Mammary epithelial cell (primary cell): ENCODE measurements at regions of chr2 and their contacts with region 1.

Region 1: GRCh38 chr2:110919738-110920137 is 187.4 kb downstream of the ACOXL start:
- DNase-seq: no peak
- H3K4me3 ChIP-seq: no peak overlapping the region
- H3K27ac ChIP-seq: no peak overlapping the region
- H3K4me1 ChIP-seq: no peaks in the 10 kb centered on the region
- H3K27me3 ChIP-seq: no peaks in the 10 kb centered on the region
- CTCF ChIP-seq: no peak

Region 2: DNA sequence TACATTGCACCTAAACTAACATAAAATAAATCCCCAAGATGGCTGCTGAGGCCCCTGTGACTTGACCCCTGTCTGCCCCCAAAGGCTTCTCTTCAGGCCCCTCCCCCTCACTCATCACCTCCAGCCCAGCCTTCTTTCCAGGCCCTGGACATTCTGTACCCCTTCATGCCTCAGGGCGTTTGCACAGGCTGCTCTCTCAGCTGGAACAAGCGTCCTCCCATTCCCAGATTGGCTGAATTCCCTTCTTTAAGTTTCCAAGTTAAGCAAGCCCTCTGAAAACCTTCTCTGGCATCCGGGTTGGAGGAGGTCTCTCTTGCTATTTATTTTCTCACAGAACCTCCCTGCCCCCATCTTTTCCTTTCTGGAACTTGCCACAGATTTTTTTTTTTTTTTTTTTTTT is 35.8 kb after region 1 on chr2:
- CTCF ChIA-PET with region 1: no interaction called
- dilution Hi-C with region 1: loop called (anchors 5 kb)
- in situ Hi-C with region 1: no loop called
- intact Hi-C with region 1: no loop called
- DNase-seq: no peak
- H3K4me3 ChIP-seq: no peak overlapping the region
- H3K27ac ChIP-seq: no peak overlapping the region
- H3K4me1 ChIP-seq: no peaks in the 10 kb centered on the region
- H3K27me3 ChIP-seq: peaks cover 3% of the 10 kb centered on the region
- CTCF ChIP-seq: no peak

Region 3: GRCh38 chr2:111030260-111030891 is 110.6 kb after region 1 on chr2:
- CTCF ChIA-PET with region 1: no interaction called
- dilution Hi-C with region 1: no loop called
- in situ Hi-C with region 1: no loop called
- intact Hi-C with region 1: no loop called
- DNase-seq: no peak
- H3K4me3 ChIP-seq: no peak overlapping the region
- H3K27ac ChIP-seq: no peak overlapping the region
- H3K4me1 ChIP-seq: peaks cover 13% of the 10 kb centered on the region
- H3K27me3 ChIP-seq: no peaks in the 10 kb centered on the region
- CTCF ChIP-seq: no peak